Activated naive CD8-positive, alpha-beta T cell treated with anti-CD3 and anti-CD28 coated beads, Interleukin-2, amount 10 ng/mL, durations not matched to agents 7 days and 5 days (primary cell): ENCODE measurements at regions of chr6 and their contacts with region 1.

Region 1: GRCh38 chr6:109491207-109491938 is 8.4 kb upstream of the ZBTB24 start:
- DNase-seq: peak; percentile 38
- ATAC-seq: peak; percentile 100
- H3K4me3 Mint-ChIP-seq: peak overlapping the region; percentile 63
- H3K27ac Mint-ChIP-seq: peak overlapping the region; percentile 92
- H3K4me1 Mint-ChIP-seq: peaks cover 26% of the 10 kb centered on the region
- H3K27me3 Mint-ChIP-seq: peaks cover 10% of the 10 kb centered on the region

Region 2: GRCh38 chr6:109165392-109165974 is 325.9 kb before region 1 on chr6:
- POLR2A ChIA-PET with region 1: no interaction called
- DNase-seq: no peak
- ATAC-seq: no peak
- H3K4me3 Mint-ChIP-seq: no peak overlapping the region
- H3K27ac Mint-ChIP-seq: no peak overlapping the region
- H3K4me1 Mint-ChIP-seq: no peaks in the 10 kb centered on the region
- H3K27me3 Mint-ChIP-seq: no peaks in the 10 kb centered on the region

Region 3: DNA sequence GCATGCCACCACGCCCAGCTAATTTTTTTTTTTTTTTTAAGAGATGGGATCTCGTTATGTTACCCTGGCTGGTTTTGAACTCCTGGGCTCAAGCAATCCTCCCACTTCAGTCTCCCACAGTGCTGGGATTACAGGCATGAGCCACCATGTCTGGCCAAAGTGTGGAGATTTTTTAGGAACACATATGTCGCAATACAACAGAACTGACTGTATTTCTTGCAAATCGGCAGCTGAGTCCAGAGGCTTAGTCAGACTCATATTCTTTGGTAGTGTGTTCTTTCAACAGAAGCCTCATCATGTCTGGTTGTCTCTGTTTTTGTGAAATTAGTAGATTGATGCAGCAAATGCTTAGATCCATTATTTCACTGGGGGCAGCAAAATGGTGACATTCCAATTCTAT is 85.2 kb before region 1 on chr6:
- POLR2A ChIA-PET with region 1: no interaction called
- DNase-seq: no peak
- ATAC-seq: no peak
- H3K4me3 Mint-ChIP-seq: no peak overlapping the region
- H3K27ac Mint-ChIP-seq: no peak overlapping the region
- H3K4me1 Mint-ChIP-seq: no peaks in the 10 kb centered on the region
- H3K27me3 Mint-ChIP-seq: peaks cover 7% of the 10 kb centered on the region

Region 4: DNA sequence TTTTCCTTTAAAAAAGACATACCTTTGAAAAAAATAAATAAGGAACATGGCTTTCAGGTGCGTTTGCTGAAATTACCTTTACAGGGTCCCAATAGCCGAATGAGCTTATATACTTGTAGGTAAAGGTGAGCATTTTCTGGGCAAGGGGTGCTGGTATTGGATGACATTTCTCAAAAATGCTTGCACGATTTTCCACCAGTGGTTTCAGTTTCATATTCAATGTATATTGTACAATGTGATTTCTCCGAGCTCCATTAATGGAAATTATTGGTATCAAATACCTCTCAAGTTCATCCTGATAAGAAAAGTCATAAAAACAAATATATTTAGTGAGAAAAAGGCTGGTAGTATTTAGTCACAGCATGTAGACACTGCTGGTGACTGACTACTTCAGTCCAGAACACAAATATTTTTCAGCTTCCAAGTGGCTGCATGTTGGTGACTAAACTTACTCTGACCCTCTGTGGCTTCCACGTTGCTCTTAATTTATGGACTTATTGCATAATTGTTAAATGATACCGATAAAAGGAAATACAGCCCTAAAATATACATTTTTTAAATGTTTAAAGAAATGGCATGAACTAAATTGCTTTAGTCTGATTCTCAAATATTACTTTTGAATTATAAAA is 24.5 kb after region 1 on chr6:
- POLR2A ChIA-PET with region 1: interaction called, 18 read pairs
- DNase-seq: no peak
- ATAC-seq: peak; percentile 62
- H3K4me3 Mint-ChIP-seq: peak overlapping the region; percentile 71
- H3K27ac Mint-ChIP-seq: peak overlapping the region; percentile 87
- H3K4me1 Mint-ChIP-seq: peaks cover 27% of the 10 kb centered on the region
- H3K27me3 Mint-ChIP-seq: no peaks in the 10 kb centered on the region